ENCODE measurements at regions of chr14 and their contacts with region 1.

Region 1: GRCh38 chr14:76876076-76876475 is 49.9 kb downstream of the LRRC74A start:
- DNase-seq: peak; percentile 80 to 86
- ATAC-seq: peak; percentile 91 to 94
- H3K4me3 ChIP-seq: no peak overlapping the region
- H3K27ac ChIP-seq: peak overlapping the region; percentile 57 to 69
- H3K4me1 ChIP-seq: peaks cover 4% of the 10 kb centered on the region; the same call in 1 of the 3 replicates
- CTCF ChIP-seq: peak; percentile 96
- EP300 ChIP-seq: no peak
- POLR2A ChIP-seq: no peak
- RAD21 ChIP-seq: peak; percentile 99 to 100

Region 2: GRCh38 chr14:76550534-76550933 is 325.5 kb before region 1 on chr14:
- CTCF ChIA-PET with region 1: no interaction called
- POLR2A ChIA-PET with region 1: no interaction called
- DNase-seq: no peak
- ATAC-seq: peak in 1 of 2 experiments; percentile 54; a peak in 2 of 6 replicates
- H3K4me3 ChIP-seq: no peak overlapping the region
- H3K27ac ChIP-seq: no peak overlapping the region
- H3K4me1 ChIP-seq: no peaks in the 10 kb centered on the region
- CTCF ChIP-seq: no peak
- EP300 ChIP-seq: no peak
- POLR2A ChIP-seq: no peak
- RAD21 ChIP-seq: no peak

Region 3: GRCh38 chr14:76742966-76743365 is 133.1 kb before region 1 on chr14:
- CTCF ChIA-PET with region 1: no interaction called
- POLR2A ChIA-PET with region 1: no interaction called
- DNase-seq: no peak
- ATAC-seq: no peak
- H3K4me3 ChIP-seq: no peak overlapping the region
- H3K27ac ChIP-seq: no peak overlapping the region
- H3K4me1 ChIP-seq: no peaks in the 10 kb centered on the region
- CTCF ChIP-seq: no peak
- EP300 ChIP-seq: no peak
- POLR2A ChIP-seq: no peak
- RAD21 ChIP-seq: no peak

Region 4: DNA sequence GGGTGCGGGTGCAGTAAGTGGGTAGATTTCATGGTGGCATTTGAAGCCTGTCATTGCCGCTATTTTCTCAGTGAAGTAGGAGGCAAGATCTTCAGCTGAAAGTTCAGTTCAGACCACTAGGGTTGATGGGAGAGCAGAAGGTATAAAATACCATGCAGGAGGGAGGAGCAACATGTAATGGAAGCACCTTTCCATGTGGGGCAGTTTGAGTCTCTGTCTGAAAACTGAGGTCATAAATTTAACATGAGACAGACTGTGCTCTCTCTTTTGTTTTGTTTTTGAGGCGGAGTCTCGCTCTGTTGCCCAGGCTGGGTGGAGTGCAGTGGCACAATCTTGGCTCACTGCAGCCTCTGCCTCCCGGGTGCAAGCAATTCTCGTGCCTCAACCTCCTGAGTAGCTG is 27.2 kb before region 1 on chr14:
- CTCF ChIA-PET with region 1: interaction called, 10 read pairs
- POLR2A ChIA-PET with region 1: no interaction called
- DNase-seq: peak; percentile 44 to 69
- ATAC-seq: peak; percentile 79 to 85; a peak in 5 of 6 replicates
- H3K4me3 ChIP-seq: no peak overlapping the region
- H3K27ac ChIP-seq: no peak overlapping the region
- H3K4me1 ChIP-seq: no peaks in the 10 kb centered on the region
- CTCF ChIP-seq: no peak
- EP300 ChIP-seq: no peak
- POLR2A ChIP-seq: no peak
- RAD21 ChIP-seq: no peak

Region 5: DNA sequence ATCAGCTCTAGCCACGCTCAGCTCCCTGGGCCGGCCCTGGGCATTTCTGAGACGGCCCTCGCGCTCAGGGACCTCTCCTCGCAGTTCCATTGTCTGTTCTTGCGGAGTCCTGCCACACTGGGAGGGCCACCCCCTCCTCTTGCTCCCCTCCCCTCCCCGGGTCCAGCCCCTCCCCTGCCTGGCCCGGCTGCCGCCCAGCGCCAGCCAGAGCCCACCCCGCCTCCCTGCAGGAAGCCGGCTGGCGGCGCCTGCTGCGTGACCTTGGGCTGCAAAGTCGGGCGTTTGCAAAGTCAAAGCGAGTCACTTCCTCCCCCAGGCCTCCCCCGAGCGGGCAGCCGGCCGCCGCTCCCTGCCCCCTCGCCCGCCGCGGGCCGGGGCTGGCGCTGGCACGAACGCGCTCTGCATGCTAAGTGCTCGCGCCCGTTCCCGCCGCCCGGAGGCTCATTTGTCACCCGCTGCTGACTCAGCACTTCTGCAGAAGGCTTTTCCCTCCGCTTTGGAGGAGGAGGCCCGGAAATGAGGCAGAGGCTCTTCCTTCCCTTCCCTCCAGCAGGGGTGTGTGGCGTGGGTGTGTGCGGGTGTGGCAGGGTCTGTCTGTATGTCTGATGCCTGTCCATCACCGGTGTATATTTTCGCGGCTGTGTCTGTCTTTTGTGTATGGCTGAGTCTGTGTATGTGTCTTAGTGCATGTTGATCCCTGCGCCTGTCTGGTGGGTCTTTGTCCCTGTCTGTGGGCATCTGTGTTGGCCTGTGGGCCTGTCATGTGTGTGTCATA is 80.4 kb after region 1 on chr14:
- CTCF ChIA-PET with region 1: interaction called, 21 read pairs
- POLR2A ChIA-PET with region 1: no interaction called
- DNase-seq: peak; percentile 66 to 97
- ATAC-seq: peak; percentile 65 to 66
- H3K4me3 ChIP-seq: peak overlapping the region; percentile 30
- H3K27ac ChIP-seq: peak overlapping the region; percentile 96 to 100
- H3K4me1 ChIP-seq: peaks cover 91% of the 10 kb centered on the region
- CTCF ChIP-seq: no peak
- EP300 ChIP-seq: peak; percentile 85 to 95; a peak in 4 of 5 replicates
- POLR2A ChIP-seq: peak; percentile 29
- RAD21 ChIP-seq: peak; percentile 34 to 73; a peak in 4 of 5 replicates

Region 6: DNA sequence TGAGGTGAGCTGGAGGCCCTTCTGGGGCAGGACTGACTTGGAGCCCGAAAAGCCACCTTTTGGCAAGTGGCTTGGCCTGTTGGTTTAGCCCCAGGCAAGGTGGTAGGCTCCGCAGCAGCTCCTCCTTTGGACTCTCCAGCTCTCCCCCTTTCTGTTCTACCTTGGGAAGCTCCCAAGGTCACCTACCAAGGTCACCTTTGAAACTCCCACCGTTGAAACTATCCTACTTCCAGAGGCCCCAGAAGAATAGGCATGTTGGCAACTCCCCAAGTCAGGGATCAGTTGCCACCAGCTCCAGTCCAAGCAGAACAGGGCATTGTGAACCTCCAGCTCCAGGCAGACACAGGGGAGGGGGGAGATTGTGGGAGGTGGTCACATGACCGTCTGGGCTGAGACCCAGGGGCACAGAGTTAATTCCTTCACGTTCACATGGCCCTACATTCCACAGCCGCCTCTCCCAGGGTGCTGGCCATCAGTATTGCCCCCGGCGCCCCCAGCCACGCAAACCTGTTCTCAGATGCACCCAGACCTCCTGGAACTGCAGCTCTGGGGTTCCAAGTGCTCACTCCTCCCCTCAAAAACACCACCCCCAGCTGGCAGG is 138.0 kb after region 1 on chr14:
- CTCF ChIA-PET with region 1: interaction called, 25 read pairs
- POLR2A ChIA-PET with region 1: no interaction called
- DNase-seq: no peak
- ATAC-seq: no peak
- H3K4me3 ChIP-seq: no peak overlapping the region
- H3K27ac ChIP-seq: peak overlapping the region in 1 of 2 experiments; percentile 49; a peak in 2 of 6 replicates
- H3K4me1 ChIP-seq: no peaks in the 10 kb centered on the region
- CTCF ChIP-seq: no peak
- EP300 ChIP-seq: no peak
- POLR2A ChIP-seq: no peak
- RAD21 ChIP-seq: no peak

Region 7: DNA sequence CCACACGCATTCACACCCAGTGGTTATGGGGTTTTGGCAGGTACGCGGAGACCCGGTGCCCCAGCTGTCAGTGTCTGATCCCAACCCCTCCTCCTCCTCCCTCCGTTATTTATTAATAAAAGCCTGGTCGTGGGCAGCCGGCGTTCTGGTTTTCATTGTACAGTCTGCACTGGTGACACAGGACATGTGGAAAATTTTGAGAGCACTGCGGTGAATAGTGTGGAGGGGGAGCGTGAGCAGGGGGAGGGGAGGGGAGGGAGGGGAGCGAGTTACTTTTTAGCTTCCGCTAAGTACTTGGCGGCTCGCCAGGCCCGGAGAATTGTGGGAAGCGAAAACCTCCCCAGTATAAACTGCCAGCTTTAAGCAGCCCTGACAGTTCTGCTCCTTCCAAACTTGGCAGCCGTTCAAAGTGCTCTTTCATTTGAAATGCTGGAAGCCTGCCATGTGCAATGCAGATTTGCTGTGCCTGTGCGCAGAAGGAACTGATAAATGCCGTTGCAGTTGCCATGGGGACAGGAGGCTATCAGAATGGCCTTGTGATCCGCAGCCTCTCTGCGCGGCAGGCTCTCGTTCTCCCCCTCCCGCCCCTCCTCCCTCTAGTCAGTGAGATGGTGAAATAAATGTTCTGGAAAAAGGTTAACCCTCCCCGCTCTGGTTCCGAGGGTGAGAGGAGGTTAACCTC is 164.1 kb after region 1 on chr14:
- CTCF ChIA-PET with region 1: interaction called, 67 read pairs
- POLR2A ChIA-PET with region 1: no interaction called
- DNase-seq: peak; percentile 88 to 99
- ATAC-seq: peak; percentile 86 to 88
- H3K4me3 ChIP-seq: peak overlapping the region; percentile 36
- H3K27ac ChIP-seq: peak overlapping the region; percentile 90 to 99
- H3K4me1 ChIP-seq: peaks cover 86% of the 10 kb centered on the region
- CTCF ChIP-seq: no peak
- EP300 ChIP-seq: peak; percentile 18 to 68; a peak in 2 of 5 replicates
- POLR2A ChIP-seq: no peak
- RAD21 ChIP-seq: peak; percentile 8 to 31; a peak in 2 of 5 replicates

Region 8: DNA sequence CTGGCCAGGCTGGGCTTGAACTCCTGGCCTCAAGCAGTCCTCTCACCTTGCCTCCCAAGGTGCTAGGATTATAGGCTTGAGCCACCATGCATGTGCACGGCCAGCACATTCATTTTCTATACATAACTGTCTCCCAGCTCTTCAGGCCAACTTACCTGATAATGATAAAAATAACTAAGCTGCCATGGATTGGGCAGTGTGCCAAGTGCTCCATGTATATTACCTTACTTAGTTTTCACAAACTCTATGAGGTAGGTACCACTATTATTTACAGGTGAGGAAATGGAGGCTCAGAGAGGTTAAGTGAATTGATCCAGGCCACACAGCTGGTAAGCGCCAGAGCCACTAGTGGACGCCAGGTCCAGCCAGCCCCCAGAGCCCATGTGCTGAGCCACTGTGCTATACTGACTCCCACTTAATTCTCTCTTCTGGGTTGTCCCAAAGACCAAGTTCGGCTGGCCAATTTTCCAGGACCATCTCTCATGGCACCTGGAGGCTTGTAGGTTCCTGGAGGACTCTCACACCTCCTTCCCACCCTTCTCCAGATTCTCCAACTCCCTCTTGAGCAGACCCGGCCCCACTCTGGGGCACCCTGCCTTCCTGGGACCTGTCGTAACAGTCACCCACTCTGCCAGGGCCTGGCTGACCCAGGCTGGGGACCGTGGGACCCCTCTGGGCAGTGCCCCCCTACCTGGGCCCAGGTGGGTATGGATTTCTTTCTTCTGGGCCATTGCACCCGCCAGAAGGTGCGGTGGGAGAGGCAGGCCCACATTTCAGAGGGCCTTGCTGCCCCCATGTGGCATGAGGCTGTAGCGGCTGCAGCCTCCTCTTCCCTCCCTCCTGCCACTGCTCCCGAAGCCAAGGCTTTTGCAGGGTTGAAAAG is 191.8 kb after region 1 on chr14:
- CTCF ChIA-PET with region 1: interaction called, 1,600 read pairs
- POLR2A ChIA-PET with region 1: interaction called, 10 read pairs
- DNase-seq: peak; percentile 79 to 87
- ATAC-seq: peak; percentile 87 to 92
- H3K4me3 ChIP-seq: no peak overlapping the region
- H3K27ac ChIP-seq: peak overlapping the region; percentile 73 to 87
- H3K4me1 ChIP-seq: peaks cover 35% of the 10 kb centered on the region
- CTCF ChIP-seq: peak; percentile 96
- EP300 ChIP-seq: 0 out of 5 replicates have a peak, but pooled peaks of 1 of the 2 experiments have one; percentile 26
- POLR2A ChIP-seq: no peak
- RAD21 ChIP-seq: peak; percentile 100

Region 9: DNA sequence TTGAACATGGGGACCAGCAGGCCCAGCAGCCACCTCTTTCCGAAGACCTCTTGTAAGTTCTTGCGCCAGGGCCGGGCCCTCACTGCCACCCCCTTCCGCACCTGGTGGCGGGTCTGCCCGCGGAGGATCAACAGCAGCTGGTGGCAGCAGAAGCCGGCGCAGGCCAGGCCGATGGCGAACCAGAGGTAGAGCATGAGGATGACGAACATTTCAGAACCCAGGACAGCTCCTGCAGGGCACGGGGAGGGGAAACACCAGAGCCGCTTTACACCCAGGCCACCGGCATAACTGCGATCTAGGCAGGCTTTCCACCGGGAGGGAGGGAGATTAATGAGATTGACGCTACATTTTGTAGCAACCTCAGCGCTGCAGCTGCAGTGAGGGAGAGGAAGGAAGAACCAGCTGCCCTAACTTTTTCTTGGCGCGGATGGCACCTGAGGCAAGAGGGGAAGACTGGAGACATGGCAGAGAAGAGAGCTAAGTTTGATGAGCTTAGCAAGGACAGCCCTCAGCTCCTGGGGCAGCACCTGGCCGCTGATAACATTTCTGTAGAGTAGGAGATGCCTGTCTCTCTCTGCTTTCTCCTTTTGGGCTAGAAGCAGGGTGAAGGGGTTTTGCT is 257.8 kb after region 1 on chr14:
- CTCF ChIA-PET with region 1: interaction called, 84 read pairs
- POLR2A ChIA-PET with region 1: no interaction called
- DNase-seq: peak; percentile 49 to 65
- ATAC-seq: peak; percentile 55 to 78; a peak in 5 of 6 replicates
- H3K4me3 ChIP-seq: no peak overlapping the region
- H3K27ac ChIP-seq: no peak overlapping the region
- H3K4me1 ChIP-seq: no peaks in the 10 kb centered on the region
- CTCF ChIP-seq: no peak
- EP300 ChIP-seq: no peak
- POLR2A ChIP-seq: no peak
- RAD21 ChIP-seq: no peak